CD4-positive, alpha-beta memory T cell (primary cell): ENCODE measurements at regions of chr2 and their contacts with region 1.

Region 1: DNA sequence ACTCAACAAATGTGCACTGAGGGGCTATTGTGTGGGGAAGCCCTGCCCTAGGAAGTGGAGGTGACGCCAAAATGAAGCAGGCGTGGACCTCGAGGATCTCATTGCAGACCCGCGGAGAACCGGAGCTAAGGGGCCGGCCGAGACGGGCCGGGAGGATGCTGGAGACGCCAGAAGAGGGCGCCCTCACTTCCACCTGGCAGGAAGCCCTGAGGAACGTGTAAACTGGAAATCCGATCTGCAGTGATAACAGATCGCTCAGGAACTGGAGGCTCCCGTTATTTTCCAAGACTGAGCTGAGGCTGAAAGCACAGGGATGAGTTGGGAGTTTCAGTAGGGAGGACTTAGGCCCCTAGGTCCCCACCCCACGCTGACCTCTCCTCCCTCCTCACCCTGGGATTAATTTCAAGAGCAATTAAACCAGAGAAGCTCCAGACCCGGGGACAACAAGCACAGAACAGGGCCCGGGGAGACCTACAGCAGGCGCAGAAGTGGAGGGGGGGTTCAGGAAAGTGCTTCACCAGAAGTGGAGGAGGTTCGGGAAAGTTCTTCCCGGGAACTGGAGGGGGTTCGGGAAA is 7.7 kb upstream of the COL6A3 start:
- DNase-seq: peak; percentile 57 to 75 (median 70)
- H3K4me3 ChIP-seq: peak overlapping the region in 1 of 2 donors; percentile 36
- H3K4me3 Mint-ChIP-seq: peak overlapping the region in 7 of 8 donors; percentile 26 to 78 (median 64)
- H3K27ac ChIP-seq: no peak overlapping the region
- H3K27ac Mint-ChIP-seq: peak overlapping the region in 5 of 7 donors; percentile 50 to 79 (median 61)
- H3K4me1 ChIP-seq: peaks cover 12% of the 10 kb centered on the region
- H3K4me1 Mint-ChIP-seq: peaks cover 12 to 21% (median 15%) of the 10 kb centered on the region in 4 donors
- H3K27me3 ChIP-seq: no peaks in the 10 kb centered on the region
- H3K27me3 Mint-ChIP-seq: no peaks in the 10 kb centered on the region

Region 2: GRCh38 chr2:235979451-235980435 is 1441.9 kb before region 1 on chr2:
- CTCF ChIA-PET with region 1: no interaction called
- POLR2A ChIA-PET with region 1: no interaction called
- intact Hi-C with region 1: no loop called
- DNase-seq: no peak
- H3K4me3 ChIP-seq: no peak overlapping the region
- H3K4me3 Mint-ChIP-seq: no peak overlapping the region
- H3K27ac ChIP-seq: no peak overlapping the region
- H3K27ac Mint-ChIP-seq: no peak overlapping the region
- H3K4me1 ChIP-seq: no peaks in the 10 kb centered on the region
- H3K4me1 Mint-ChIP-seq: no peaks in the 10 kb centered on the region
- H3K27me3 ChIP-seq: no peaks in the 10 kb centered on the region
- H3K27me3 Mint-ChIP-seq: peaks cover 1% of the 10 kb centered on the region in 2 donors

Region 3: DNA sequence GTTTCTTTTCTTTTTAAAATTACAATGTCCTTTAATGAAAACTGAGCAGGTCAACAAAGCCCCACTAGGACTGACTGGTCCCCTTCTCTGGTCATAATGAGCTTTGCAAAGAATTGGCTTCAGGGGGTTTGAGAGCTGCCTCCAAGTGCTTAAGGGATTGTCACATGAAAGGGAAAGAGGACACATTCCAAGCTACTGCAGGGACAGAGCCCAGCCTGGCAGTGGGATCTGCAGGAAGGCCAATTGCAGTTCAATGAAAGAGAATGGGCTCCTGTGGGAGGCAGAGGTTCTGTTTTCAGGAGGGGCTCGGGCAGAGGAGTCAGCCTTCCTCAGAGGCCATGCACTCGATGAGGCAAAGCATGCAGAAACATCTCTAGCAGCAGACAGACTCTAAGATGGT is 936.1 kb before region 1 on chr2:
- CTCF ChIA-PET with region 1: no interaction called
- POLR2A ChIA-PET with region 1: no interaction called
- intact Hi-C with region 1: no loop called
- DNase-seq: no peak
- H3K4me3 ChIP-seq: no peak overlapping the region
- H3K4me3 Mint-ChIP-seq: no peak overlapping the region
- H3K27ac ChIP-seq: no peak overlapping the region
- H3K27ac Mint-ChIP-seq: no peak overlapping the region
- H3K4me1 ChIP-seq: no peaks in the 10 kb centered on the region
- H3K4me1 Mint-ChIP-seq: no peaks in the 10 kb centered on the region
- H3K27me3 ChIP-seq: no peaks in the 10 kb centered on the region
- H3K27me3 Mint-ChIP-seq: peaks cover 5 to 7% of the 10 kb centered on the region in 2 donors

Region 4: DNA sequence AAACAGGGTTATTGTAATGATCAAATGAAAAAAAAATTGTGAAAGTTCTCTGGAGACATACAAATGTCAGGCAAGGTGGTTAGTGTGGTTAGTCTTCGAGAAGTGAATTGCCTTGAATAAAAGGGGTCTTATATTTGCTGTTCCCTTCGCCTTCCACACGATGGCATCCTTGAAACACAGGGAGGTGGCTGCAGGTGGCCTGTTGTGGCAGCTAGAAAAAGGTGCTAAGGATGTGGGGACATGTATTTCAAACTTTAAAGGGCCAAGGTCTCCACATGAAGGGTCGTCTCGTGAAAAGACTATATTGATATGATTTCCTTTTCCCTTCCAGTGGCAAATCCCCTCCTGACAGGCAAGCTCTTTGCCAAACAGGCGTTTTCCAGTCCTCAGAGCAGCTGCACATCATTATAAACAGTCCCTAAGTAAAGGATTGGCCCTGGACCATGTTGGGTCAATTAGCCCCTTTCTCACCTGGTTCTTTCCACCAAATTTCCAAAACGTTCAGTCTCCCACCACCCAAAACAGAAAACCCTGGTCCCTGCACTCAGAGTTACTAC is 267.5 kb before region 1 on chr2:
- CTCF ChIA-PET with region 1: interaction called, 18 read pairs
- POLR2A ChIA-PET with region 1: no interaction called
- intact Hi-C with region 1: loop called (anchors 1 kb)
- DNase-seq: peak; percentile 48 to 59 (median 57)
- H3K4me3 ChIP-seq: no peak overlapping the region
- H3K4me3 Mint-ChIP-seq: no peak overlapping the region
- H3K27ac ChIP-seq: no peak overlapping the region
- H3K27ac Mint-ChIP-seq: no peak overlapping the region
- H3K4me1 ChIP-seq: no peaks in the 10 kb centered on the region
- H3K4me1 Mint-ChIP-seq: peaks cover 0 to 5% (median 2%) of the 10 kb centered on the region in 4 donors
- H3K27me3 ChIP-seq: no peaks in the 10 kb centered on the region
- H3K27me3 Mint-ChIP-seq: peaks cover 1 to 3% of the 10 kb centered on the region in 2 donors

Region 5: DNA sequence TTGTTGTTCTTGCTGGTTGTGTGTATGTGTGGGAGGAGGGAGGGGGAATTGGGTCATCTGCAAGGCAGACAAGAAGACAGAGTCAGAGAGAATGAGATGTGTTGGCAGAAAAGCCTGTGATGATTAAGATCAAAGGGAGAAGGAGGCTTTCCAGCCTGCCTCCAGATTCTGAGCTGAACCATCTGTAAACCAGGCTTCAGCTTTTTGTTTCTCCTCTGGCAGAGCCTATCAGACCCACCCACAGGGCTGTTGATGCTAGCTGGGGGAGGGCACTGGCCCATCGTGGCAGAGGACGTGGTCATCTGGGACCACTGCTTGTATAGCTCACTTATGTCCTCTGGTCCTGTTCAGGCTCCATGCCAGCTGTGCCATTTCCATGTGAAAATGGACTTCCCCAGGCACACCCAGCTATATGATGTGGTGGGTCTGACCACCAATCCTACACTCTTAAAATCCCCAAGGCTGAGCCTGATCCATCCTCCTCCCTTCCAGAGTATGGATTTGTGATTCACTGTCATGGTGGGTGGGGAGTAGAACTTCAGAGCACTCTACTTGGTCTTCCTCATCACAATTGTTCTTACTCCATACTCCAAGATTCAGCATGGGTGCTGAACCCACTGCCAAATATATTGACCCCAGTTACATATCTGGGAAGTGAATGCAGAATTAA is 20.1 kb after region 1 on chr2:
- CTCF ChIA-PET with region 1: interaction called, 54 read pairs
- POLR2A ChIA-PET with region 1: interaction called, 6 read pairs
- intact Hi-C with region 1: loop called (anchors 2 kb)
- DNase-seq: peak; percentile 38 to 59 (median 56)
- H3K4me3 ChIP-seq: no peak overlapping the region
- H3K4me3 Mint-ChIP-seq: peak overlapping the region in 7 of 8 donors; percentile 3 to 63 (median 28)
- H3K27ac ChIP-seq: no peak overlapping the region
- H3K27ac Mint-ChIP-seq: peak overlapping the region; percentile 31 to 87 (median 43)
- H3K4me1 ChIP-seq: peaks cover 45% of the 10 kb centered on the region
- H3K4me1 Mint-ChIP-seq: peaks cover 30 to 51% (median 42%) of the 10 kb centered on the region in 4 donors
- H3K27me3 ChIP-seq: no peaks in the 10 kb centered on the region
- H3K27me3 Mint-ChIP-seq: no peaks in the 10 kb centered on the region

Region 6: GRCh38 chr2:237459741-237460174 is 38.1 kb after region 1 on chr2:
- CTCF ChIA-PET with region 1: interaction called, 101 read pairs
- POLR2A ChIA-PET with region 1: no interaction called
- intact Hi-C with region 1: no loop called
- DNase-seq: no peak
- H3K4me3 ChIP-seq: no peak overlapping the region
- H3K4me3 Mint-ChIP-seq: no peak overlapping the region
- H3K27ac ChIP-seq: no peak overlapping the region
- H3K27ac Mint-ChIP-seq: no peak overlapping the region
- H3K4me1 ChIP-seq: no peaks in the 10 kb centered on the region
- H3K4me1 Mint-ChIP-seq: peaks cover 0 to 9% (median 3%) of the 10 kb centered on the region in 4 donors
- H3K27me3 ChIP-seq: no peaks in the 10 kb centered on the region
- H3K27me3 Mint-ChIP-seq: peaks cover 0 to 1% of the 10 kb centered on the region in 2 donors

Region 7: GRCh38 chr2:237483040-237483721 is 61.6 kb after region 1 on chr2:
- CTCF ChIA-PET with region 1: interaction called, 381 read pairs
- POLR2A ChIA-PET with region 1: no interaction called
- intact Hi-C with region 1: no loop called
- DNase-seq: no peak
- H3K4me3 ChIP-seq: no peak overlapping the region
- H3K4me3 Mint-ChIP-seq: no peak overlapping the region
- H3K27ac ChIP-seq: no peak overlapping the region
- H3K27ac Mint-ChIP-seq: no peak overlapping the region
- H3K4me1 ChIP-seq: no peaks in the 10 kb centered on the region
- H3K4me1 Mint-ChIP-seq: peaks cover 0 to 1% (median 0%) of the 10 kb centered on the region in 4 donors
- H3K27me3 ChIP-seq: no peaks in the 10 kb centered on the region
- H3K27me3 Mint-ChIP-seq: peaks cover 24 to 54% of the 10 kb centered on the region in 2 donors

Region 8: DNA sequence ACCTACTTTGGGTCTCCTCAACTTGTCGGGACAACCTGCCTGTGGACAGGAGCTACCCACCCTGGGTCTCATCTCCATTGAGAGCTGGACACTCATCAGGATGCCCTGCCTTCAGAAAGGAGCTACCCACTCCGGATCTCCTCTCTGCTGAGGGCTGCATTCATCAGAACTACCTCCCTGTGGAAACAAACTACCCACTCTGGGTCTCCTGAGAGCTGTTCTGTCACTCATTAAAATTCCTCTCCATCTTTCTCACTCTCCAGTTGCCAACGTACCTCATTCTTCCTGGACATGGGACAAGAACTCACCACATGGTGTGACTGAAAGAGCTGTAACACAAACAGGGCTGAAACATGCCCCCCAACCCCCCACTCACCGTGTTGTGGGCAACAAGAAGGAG is 522.7 kb after region 1 on chr2:
- CTCF ChIA-PET with region 1: no interaction called
- POLR2A ChIA-PET with region 1: no interaction called
- intact Hi-C with region 1: no loop called
- DNase-seq: no peak
- H3K4me3 ChIP-seq: no peak overlapping the region
- H3K4me3 Mint-ChIP-seq: peak overlapping the region in 3 of 8 donors; percentile 20 to 65 (median 62)
- H3K27ac ChIP-seq: no peak overlapping the region
- H3K27ac Mint-ChIP-seq: peak overlapping the region in 5 of 7 donors; percentile 57 to 85 (median 82)
- H3K4me1 ChIP-seq: peaks cover 74% of the 10 kb centered on the region
- H3K4me1 Mint-ChIP-seq: peaks cover 46 to 79% (median 64%) of the 10 kb centered on the region in 4 donors
- H3K27me3 ChIP-seq: no peaks in the 10 kb centered on the region
- H3K27me3 Mint-ChIP-seq: no peaks in the 10 kb centered on the region